ENCODE measurements at regions of chr14 and their contacts with region 1.

Region 1: DNA sequence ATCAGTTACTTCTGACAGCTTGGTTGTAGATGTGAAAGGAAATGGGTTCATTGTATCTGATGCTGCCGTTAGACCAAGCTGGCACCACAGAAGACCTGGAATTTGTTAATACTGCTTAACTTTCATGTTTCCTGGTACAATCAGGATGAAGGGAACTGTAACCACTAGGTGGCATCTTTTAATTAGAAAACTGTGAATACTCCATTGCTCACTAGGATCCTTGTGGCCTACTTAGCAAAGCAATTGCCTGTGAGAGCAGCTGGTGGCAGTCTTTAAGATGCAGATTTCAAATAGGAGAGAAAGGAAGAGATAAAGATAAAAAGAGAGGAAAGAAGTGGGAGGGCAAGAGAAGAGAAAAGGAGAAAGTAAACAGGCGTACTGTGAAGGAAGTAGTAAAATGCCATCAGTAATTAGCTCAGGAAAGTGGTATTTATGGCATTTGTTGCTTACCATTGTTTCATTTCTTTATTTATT is 114.5 kb downstream of the RAD51B start:
- DNase-seq: peak; percentile 29
- H3K4me3 ChIP-seq: no peak overlapping the region
- CTCF ChIP-seq: peak; percentile 49

Region 2: DNA sequence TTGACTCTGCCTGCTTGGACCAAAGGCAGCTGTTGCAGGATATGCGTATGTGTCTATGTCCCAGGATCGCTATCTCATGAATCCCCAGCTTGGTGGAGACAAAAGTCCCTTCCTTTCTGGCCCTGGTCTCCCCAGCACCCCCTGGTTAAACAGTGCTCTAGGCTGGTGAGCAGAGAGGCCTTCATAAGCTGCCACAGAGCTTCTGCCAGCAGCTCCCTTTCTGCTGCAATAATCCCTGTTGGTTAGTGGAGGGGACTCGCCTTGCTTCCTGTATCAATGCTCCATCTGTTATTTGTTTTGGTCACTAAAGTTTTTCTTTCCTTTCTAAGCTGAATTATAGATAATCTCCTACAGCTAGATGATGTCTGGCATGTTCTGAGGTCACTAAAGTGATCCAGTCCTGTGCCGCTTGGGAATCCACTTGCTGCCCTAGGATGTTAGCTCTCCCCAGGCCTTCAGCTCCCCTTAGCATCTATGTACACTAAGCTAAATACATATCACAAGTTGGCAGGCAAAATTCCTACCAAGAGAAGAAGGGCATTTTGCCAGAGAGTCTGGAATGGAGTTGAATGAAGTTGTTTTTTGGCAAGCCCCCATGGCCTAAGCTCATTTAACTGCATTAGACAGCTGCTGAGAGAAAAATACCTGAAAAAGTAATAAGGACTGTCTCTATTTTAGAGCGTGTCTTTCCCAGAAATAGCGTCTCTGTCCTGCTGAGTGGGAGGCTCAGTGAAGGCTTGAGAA is 184.5 kb before region 1 on chr14:
- CTCF ChIA-PET with region 1: no interaction called
- POLR2A ChIA-PET with region 1: no interaction called
- DNase-seq: no peak
- H3K4me3 ChIP-seq: no peak overlapping the region
- CTCF ChIP-seq: no peak

Region 3: DNA sequence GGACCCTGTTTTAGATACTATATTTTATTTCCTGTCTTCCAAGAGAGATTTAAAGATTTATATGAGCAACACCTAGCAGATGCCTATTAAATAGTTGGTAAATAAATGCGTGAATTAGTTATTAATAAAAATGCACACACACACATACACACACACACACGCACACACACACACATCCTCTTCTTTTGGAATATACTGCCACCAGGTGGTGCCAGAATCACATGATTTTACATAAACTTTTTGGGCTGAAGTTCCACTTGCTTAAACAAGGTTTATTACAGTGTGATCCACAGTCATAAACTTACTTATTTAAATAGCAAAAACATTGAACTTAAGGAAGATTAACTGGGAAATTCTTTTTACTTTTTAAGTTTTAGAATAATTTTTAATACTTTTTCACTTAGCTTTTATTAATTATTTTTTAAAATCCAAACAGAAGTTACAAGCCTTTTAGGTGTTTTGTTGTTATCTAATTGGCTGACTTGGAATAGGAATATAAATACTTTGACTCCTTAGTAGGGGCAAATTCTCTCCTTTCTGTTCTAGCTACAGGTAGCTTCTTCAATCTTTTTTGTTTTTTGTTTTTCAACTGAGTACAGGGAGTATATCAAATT is 96.9 kb before region 1 on chr14:
- CTCF ChIA-PET with region 1: interaction called, 17 read pairs
- POLR2A ChIA-PET with region 1: no interaction called
- DNase-seq: peak; percentile 54
- H3K4me3 ChIP-seq: no peak overlapping the region
- CTCF ChIP-seq: peak; percentile 64

Region 4: GRCh38 chr14:67883717-67884116 is 50.3 kb before region 1 on chr14:
- CTCF ChIA-PET with region 1: interaction called, 55 read pairs
- POLR2A ChIA-PET with region 1: no interaction called
- DNase-seq: no peak
- H3K4me3 ChIP-seq: no peak overlapping the region
- CTCF ChIP-seq: no peak

Region 5: DNA sequence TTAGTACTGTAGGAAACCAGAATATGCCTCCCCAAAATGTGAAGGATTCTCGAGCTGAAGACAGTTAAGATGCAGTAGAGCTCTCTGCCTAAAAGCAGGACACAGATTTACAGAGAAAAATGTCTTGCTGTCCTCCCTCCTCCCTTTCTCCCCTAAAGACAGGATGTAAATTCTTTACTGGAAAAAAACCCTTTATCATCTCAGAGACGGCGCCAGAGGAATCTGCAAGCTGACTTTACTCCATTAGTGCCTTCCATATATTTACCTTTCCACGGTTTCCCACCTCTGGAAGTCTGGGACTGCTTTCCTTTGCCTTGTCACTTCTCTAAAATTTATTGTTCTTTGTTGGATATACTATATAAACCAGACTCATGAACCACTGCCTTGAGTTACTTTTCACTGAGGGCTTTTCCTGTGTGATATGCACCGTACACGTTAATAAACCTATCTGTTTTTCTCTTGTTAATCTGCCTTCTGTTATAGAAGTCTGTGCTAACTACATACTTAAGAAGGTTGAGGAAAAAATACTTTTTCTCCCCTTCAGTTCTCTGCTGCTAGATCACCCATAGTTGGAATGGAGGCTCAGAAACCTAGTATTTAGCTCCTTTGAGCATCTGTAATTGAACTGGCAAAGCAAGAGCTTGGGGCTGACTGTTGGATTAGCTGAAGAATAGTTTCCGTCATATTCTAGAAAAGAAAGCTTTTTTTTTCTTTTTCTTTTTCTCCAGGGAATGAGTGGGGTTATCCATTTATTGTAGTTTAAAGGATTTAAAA is 14.6 kb before region 1 on chr14:
- CTCF ChIA-PET with region 1: interaction called, 27 read pairs
- POLR2A ChIA-PET with region 1: no interaction called
- DNase-seq: no peak
- H3K4me3 ChIP-seq: no peak overlapping the region
- CTCF ChIP-seq: no peak

Region 6: GRCh38 chr14:67951529-67952135 is 17.6 kb after region 1 on chr14:
- CTCF ChIA-PET with region 1: interaction called, 10 read pairs
- POLR2A ChIA-PET with region 1: no interaction called
- DNase-seq: no peak
- H3K4me3 ChIP-seq: no peak overlapping the region
- CTCF ChIP-seq: no peak

Region 7: DNA sequence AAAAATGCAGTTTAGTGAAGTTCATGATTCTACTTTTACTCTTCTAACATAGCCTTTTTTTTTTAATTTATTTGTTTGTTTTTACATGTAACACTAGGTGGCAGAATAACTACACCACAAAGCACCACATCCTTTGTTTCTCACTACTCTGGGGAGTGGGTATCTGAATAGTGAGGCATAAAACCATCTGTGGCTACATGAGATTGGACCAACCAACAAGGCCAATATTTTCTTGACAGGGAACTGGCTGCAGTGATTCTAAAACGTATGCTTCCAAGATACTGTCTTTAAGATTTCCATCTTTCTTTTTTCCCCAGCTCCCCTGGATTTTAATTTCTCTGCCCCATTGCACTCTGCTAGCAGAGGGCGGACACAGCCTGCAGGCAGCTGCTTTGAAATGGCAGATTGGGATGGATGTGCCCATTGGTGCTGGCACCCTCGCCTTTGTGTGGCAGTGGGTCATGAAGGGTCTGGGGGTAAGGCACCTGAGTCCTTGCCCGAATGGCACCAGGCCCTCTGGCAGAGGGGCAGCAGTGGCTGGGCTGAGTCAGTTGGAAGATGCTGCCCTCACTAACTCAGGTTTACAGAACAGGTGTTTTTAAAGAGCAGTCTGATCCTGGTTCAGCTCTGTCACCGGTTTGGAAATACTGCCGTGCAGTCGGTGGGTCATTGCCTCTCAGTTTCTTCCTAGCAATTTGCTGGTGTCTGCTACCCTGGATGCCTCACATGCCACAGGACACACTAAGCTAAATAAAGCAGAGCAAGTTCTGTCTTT is 314.6 kb after region 1 on chr14:
- CTCF ChIA-PET with region 1: interaction called, 10 read pairs
- POLR2A ChIA-PET with region 1: no interaction called
- DNase-seq: no peak
- H3K4me3 ChIP-seq: no peak overlapping the region
- CTCF ChIP-seq: peak; percentile 21

Region 8: GRCh38 chr14:68824517-68825347 is 890.7 kb after region 1 on chr14:
- CTCF ChIA-PET with region 1: interaction called, 149 read pairs
- POLR2A ChIA-PET with region 1: no interaction called
- DNase-seq: no peak
- H3K4me3 ChIP-seq: no peak overlapping the region
- CTCF ChIP-seq: peak; percentile 93

Measured in AG04449 (cell line).